Activated CD4-positive, alpha-beta memory T cell treated with anti-CD3 and anti-CD28 coated beads for 36 hours (primary cell): ENCODE measurements at regions of chr7 and their contacts with region 1.

Region 1: DNA sequence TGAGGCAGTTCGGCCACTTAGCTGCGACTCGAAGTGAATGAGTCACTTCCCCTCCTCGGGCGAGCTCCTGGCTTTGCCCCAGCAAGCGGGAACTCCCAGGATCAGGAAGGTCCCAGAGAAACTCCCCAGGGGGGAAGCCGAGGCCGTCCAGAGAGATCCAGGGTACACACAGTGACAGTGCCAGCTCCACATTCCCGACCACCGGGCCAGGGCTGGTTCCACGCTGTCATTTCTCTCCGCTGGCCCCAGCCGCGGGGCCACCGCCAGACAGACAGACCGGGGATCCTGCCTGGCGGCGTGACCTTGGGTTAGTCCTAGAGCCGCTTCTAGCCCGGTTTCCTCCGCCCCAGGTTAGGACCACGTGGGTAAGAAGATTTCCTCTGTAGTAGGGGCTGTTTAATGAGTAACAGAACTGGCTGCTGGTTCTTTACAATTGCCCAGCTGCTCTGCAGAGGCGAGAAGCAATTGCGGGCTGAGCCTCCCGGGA is 463 bp upstream of the UPP1 start:
- DNase-seq: no peak
- H3K4me3 Mint-ChIP-seq: peak overlapping the region; percentile 83
- H3K27ac Mint-ChIP-seq: peak overlapping the region; percentile 91
- H3K4me1 Mint-ChIP-seq: peaks cover 77% of the 10 kb centered on the region
- H3K27me3 Mint-ChIP-seq: no peaks in the 10 kb centered on the region

Region 2: DNA sequence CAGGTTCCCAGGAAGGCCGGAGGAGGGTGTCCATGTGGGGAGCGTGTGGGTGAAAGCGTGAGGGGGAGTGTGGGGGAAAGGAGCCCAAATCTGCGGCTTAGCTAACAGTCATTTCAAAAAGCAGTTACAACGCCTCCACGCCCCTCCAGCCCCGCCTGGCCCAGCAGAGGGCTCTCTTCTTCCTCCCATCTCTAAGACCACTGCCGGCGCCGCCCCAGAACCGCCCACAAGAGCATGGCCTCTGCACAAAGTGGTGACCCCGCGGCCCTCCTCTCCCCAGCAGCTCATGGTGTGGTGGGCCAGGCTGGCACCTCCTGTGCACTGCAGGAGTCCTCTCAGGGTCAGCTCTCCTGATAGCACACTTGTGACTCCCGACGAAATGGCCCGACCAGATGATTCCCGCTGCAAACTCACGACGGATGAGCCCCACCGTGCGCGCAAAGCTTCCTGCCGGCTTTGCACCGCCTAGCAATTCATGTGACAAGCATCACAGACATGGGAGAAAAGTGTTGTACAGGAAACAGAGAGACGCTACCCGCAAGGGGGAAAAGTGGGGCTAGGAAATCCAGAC is 96.8 kb before region 1 on chr7:
- CTCF ChIA-PET with region 1: interaction called, 7 read pairs
- POLR2A ChIA-PET with region 1: interaction called, 6 read pairs
- intact Hi-C with region 1: loop called (anchors 1 kb)
- DNase-seq: peak; percentile 93
- H3K4me3 Mint-ChIP-seq: peak overlapping the region; percentile 87
- H3K27ac Mint-ChIP-seq: peak overlapping the region; percentile 86
- H3K4me1 Mint-ChIP-seq: peaks cover 15% of the 10 kb centered on the region
- H3K27me3 Mint-ChIP-seq: no peaks in the 10 kb centered on the region

Region 3: DNA sequence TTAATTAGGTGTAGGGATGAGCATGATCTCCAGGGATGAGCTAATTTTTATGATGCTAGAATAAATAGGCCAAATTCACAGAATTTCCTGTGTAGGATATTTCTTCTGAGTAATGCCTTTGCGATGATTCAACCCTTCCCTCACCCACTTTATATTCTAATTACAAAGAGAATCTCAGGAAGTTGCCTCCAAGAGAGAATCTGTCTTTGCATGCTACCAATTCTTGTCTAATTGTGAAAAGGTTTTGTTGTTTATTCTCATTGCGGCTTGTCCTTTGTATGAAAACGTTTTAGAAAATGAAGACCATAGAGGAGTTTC is 47.0 kb before region 1 on chr7:
- CTCF ChIA-PET with region 1: interaction called, 7 read pairs
- POLR2A ChIA-PET with region 1: interaction called, 4 read pairs
- intact Hi-C with region 1: loop called (anchors 1 kb)
- DNase-seq: no peak
- H3K4me3 Mint-ChIP-seq: no peak overlapping the region
- H3K27ac Mint-ChIP-seq: peak overlapping the region; percentile 73
- H3K4me1 Mint-ChIP-seq: peaks cover 42% of the 10 kb centered on the region
- H3K27me3 Mint-ChIP-seq: peaks cover 3% of the 10 kb centered on the region

Region 4: GRCh38 chr7:48101968-48102367 is 13.4 kb after region 1 on chr7:
- CTCF ChIA-PET with region 1: interaction called, 7 read pairs
- POLR2A ChIA-PET with region 1: interaction called, 22 read pairs
- intact Hi-C with region 1: loop called (anchors 1 kb)
- DNase-seq: peak; percentile 47
- H3K4me3 Mint-ChIP-seq: no peak overlapping the region
- H3K27ac Mint-ChIP-seq: peak overlapping the region; percentile 70
- H3K4me1 Mint-ChIP-seq: peaks cover 37% of the 10 kb centered on the region
- H3K27me3 Mint-ChIP-seq: no peaks in the 10 kb centered on the region

Region 5: DNA sequence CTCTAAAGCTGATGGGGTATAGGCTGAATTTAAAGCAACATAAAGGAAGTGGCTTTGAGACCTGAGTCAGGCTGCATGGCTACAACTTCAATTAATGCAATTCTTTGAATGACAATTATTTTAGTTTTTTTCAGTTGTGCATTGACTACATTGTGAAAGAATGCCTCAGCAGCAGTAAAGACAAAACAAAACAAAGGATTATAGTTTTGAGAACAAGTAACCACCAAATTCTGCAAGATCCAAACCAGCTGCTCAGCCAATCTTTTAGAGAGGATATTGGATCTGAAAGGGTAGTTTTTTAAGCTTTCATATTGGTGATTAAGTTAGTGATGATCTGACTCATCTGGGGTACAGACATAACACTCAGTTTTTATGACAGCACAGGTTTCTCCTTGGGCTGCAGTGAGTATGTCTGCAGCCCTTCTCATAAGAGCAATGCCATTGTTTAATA is 42.1 kb after region 1 on chr7:
- CTCF ChIA-PET with region 1: no interaction called
- POLR2A ChIA-PET with region 1: interaction called, 7 read pairs
- intact Hi-C with region 1: loop called (anchors 2 kb)
- DNase-seq: no peak
- H3K4me3 Mint-ChIP-seq: no peak overlapping the region
- H3K27ac Mint-ChIP-seq: no peak overlapping the region
- H3K4me1 Mint-ChIP-seq: peaks cover 5% of the 10 kb centered on the region
- H3K27me3 Mint-ChIP-seq: peaks cover 22% of the 10 kb centered on the region